B cell (primary cell): ENCODE measurements at regions of chr15 and their contacts with region 1.

Region 1: GRCh38 chr15:65286704-65287519 is at the start of gene PARP16:
- DNase-seq: peak; percentile 95
- ATAC-seq: peak; percentile 95
- H3K4me3 ChIP-seq: peak within 1 kb of the TSS; percentile 67 to 89 (median 84)
- H3K4me3 Mint-ChIP-seq: peak within 1 kb of the TSS; percentile 89
- H3K27ac ChIP-seq: peak within 1 kb of the TSS; percentile 83 to 91
- H3K27ac Mint-ChIP-seq: peak within 1 kb of the TSS; percentile 89
- H3K4me1 ChIP-seq: peaks cover 18 to 19% of the 10 kb centered on the region in 2 donors
- H3K4me1 Mint-ChIP-seq: peaks cover 37% of the 10 kb centered on the region
- H3K27me3 ChIP-seq: no peaks in the 10 kb centered on the region
- H3K27me3 Mint-ChIP-seq: no peaks in the 10 kb centered on the region
- CTCF ChIP-seq: no peak
- total RNA-seq, gene PARP16: 18.2 and 21.6 TPM in 2 replicates

Region 2: GRCh38 chr15:65049418-65049840 is 237.5 kb before region 1 on chr15:
- CTCF ChIA-PET with region 1: no interaction called
- POLR2A ChIA-PET with region 1: no interaction called
- intact Hi-C with region 1: loop called (anchors 2 kb)
- DNase-seq: peak; percentile 96
- ATAC-seq: peak; percentile 98
- H3K4me3 ChIP-seq: peak overlapping the region; percentile 14 to 57 (median 34)
- H3K4me3 Mint-ChIP-seq: peak overlapping the region; percentile 81
- H3K27ac ChIP-seq: no peak overlapping the region
- H3K27ac Mint-ChIP-seq: peak overlapping the region; percentile 80
- H3K4me1 ChIP-seq: peaks cover 13 to 18% of the 10 kb centered on the region in 2 donors
- H3K4me1 Mint-ChIP-seq: peaks cover 15% of the 10 kb centered on the region
- H3K27me3 ChIP-seq: peaks cover 0 to 6% (median 0%) of the 10 kb centered on the region in 4 experiments
- H3K27me3 Mint-ChIP-seq: peaks cover 4% of the 10 kb centered on the region
- CTCF ChIP-seq: no peak

Region 3: GRCh38 chr15:65184868-65185738 is 101.8 kb before region 1 on chr15 and contains the start of gene CLPX:
- CTCF ChIA-PET with region 1: interaction called, 17 read pairs
- POLR2A ChIA-PET with region 1: interaction called, 34 read pairs
- intact Hi-C with region 1: loop called (anchors 1 kb)
- DNase-seq: peak; percentile 96
- ATAC-seq: peak; percentile 89
- H3K4me3 ChIP-seq: peak within 1 kb of the TSS; percentile 58 to 94 (median 88)
- H3K4me3 Mint-ChIP-seq: peak within 1 kb of the TSS; percentile 96
- H3K27ac ChIP-seq: peak within 1 kb of the TSS; percentile 74 to 88
- H3K27ac Mint-ChIP-seq: peak within 1 kb of the TSS; percentile 97
- H3K4me1 ChIP-seq: peaks cover 17 to 20% of the 10 kb centered on the region in 2 donors
- H3K4me1 Mint-ChIP-seq: peaks cover 26% of the 10 kb centered on the region
- H3K27me3 ChIP-seq: no peaks in the 10 kb centered on the region
- H3K27me3 Mint-ChIP-seq: no peaks in the 10 kb centered on the region
- CTCF ChIP-seq: no peak
- total RNA-seq, gene CLPX: 54.5 and 63.1 TPM in 2 replicates

Region 4: DNA sequence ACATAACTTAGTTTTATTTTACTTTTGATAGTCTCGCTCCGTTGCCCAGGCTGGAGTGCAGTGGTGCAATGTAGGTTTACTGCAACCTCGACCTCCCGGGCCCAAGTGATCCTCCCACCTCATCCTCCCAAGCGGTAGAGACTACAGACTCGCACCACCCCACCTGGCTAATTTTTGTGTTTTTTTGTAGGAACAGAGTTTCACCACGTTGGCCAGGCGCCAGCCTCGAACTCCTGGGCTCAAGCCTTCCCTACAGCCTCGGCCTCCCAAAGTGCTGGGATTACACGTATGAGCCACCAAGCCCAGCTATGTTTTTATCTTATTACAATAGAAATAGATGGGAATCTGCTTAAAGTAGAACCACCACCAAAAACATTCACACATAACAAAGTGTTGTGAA is 11.8 kb after region 1 on chr15:
- CTCF ChIA-PET with region 1: interaction called, 25 read pairs
- POLR2A ChIA-PET with region 1: interaction called, 25 read pairs
- intact Hi-C with region 1: loop called (anchors 1 kb)
- DNase-seq: no peak
- ATAC-seq: no peak
- H3K4me3 ChIP-seq: no peak overlapping the region
- H3K4me3 Mint-ChIP-seq: no peak overlapping the region
- H3K27ac ChIP-seq: no peak overlapping the region
- H3K27ac Mint-ChIP-seq: peak overlapping the region; percentile 27
- H3K4me1 ChIP-seq: peaks cover 22 to 35% of the 10 kb centered on the region in 2 donors
- H3K4me1 Mint-ChIP-seq: peaks cover 36% of the 10 kb centered on the region
- H3K27me3 ChIP-seq: no peaks in the 10 kb centered on the region
- H3K27me3 Mint-ChIP-seq: no peaks in the 10 kb centered on the region
- CTCF ChIP-seq: no peak